ENCODE measurements at regions of chr11 and their contacts with region 1.

Region 1: DNA sequence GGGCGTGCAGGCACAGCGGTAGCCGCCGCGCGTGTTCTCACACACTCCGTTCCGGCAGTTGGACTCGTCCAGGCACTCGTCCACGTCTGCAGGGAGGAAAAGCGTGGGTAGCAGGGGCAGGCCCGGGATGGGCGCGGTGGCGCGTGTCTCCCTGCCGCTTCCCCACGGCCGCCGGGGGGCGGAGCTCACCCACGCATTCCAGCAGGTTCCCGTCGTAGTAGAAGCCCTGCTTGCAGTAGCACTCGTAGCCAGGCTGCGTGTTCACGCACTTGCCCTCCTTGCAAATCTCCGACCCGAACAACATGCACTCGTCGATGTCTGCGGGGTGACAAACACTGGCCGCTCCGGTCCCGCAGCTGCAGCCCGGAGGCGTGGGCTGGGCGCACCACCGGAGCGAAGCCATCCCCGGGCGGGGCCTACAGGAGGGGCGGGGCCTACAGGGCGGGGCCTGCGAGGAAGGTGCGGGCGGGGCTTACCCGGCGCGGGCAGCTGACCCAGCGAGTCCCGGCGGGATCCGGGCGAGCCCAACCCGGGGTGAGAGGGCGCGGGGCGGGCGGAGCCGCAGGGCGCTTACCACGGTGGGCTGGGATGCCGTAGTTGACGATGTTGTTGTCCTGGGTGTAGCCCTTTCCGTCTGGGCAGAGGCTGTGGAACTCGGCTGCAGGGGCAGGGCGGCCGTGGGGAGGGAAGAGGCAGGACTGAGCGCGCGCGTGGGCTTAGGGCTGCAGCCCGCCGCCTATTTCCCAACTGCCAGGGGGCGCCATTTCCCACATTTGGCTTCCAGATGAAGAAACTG is 15.6 kb downstream of the SCYL1 start:
- DNase-seq: peak; percentile 92
- ATAC-seq: peak; percentile 91
- H3K4me3 Mint-ChIP-seq: peak overlapping the region; percentile 79
- H3K27ac Mint-ChIP-seq: peak overlapping the region; percentile 82
- H3K4me1 Mint-ChIP-seq: peaks cover 20% of the 10 kb centered on the region
- H3K27me3 Mint-ChIP-seq: no peaks in the 10 kb centered on the region

Region 2: DNA sequence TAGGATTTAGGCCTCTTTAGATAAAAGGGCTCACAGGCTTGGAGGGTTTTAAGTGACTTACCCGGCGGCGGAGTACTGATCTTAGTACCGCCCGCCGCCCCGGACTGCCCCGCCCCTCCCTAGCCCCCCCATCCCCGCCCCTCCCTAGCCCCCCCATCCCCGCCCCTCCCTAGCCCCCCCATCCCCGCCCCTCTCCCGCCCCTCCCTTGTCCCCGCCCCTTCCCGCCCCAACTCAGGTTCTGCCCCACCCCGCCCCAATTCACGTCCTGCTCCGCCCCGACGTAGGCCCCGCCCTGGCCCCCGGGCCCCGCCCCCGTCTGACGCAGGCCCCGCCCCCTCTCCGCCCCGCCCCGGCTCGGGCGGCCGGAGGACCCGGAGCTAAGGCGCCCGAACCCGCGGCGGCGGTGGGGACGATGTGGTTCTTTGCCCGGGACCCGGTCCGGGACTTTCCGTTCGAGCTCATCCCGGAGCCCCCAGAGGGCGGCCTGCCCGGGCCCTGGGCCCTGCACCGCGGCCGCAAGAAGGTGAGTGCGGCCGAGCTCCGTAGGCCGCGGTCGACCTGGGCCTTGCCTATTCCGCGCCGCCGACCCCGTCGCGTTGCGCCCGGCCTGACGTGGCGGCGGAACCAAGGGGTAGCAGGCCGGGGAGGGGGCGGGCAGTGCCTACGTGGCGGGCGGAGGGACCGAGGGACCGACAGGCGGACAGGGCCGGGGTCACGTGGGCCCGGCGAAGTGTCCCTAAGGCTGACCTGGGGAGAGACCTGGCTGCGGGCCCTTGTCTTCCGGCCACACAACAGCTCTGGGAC is 15.6 kb before region 1 on chr11 and contains the start of gene SCYL1:
- CTCF ChIA-PET with region 1: interaction called, 41 read pairs
- POLR2A ChIA-PET with region 1: interaction called, 12 read pairs
- DNase-seq: peak; percentile 84
- ATAC-seq: peak; percentile 79
- H3K4me3 Mint-ChIP-seq: peak within 1 kb of the TSS; percentile 83
- H3K27ac Mint-ChIP-seq: peak within 1 kb of the TSS; percentile 89
- H3K4me1 Mint-ChIP-seq: peaks cover 62% of the 10 kb centered on the region
- H3K27me3 Mint-ChIP-seq: no peaks in the 10 kb centered on the region
- total RNA-seq, gene SCYL1: 68.0 to 69.5 TPM

Region 3: GRCh38 chr11:65551572-65552398 is 11.3 kb after region 1 on chr11:
- CTCF ChIA-PET with region 1: interaction called, 35 read pairs
- POLR2A ChIA-PET with region 1: interaction called, 3 read pairs
- DNase-seq: peak; percentile 77
- ATAC-seq: peak; percentile 44
- H3K4me3 Mint-ChIP-seq: peak overlapping the region; percentile 13
- H3K27ac Mint-ChIP-seq: peak overlapping the region; percentile 78
- H3K4me1 Mint-ChIP-seq: peaks cover 77% of the 10 kb centered on the region
- H3K27me3 Mint-ChIP-seq: no peaks in the 10 kb centered on the region

Region 4: GRCh38 chr11:65569973-65570918 is 29.8 kb after region 1 on chr11 and contains the start of gene ZNRD2:
- CTCF ChIA-PET with region 1: interaction called, 95 read pairs
- POLR2A ChIA-PET with region 1: interaction called, 9 read pairs
- DNase-seq: peak; percentile 99
- ATAC-seq: peak; percentile 70
- H3K4me3 Mint-ChIP-seq: peak within 1 kb of the TSS; percentile 100
- H3K27ac Mint-ChIP-seq: peak within 1 kb of the TSS; percentile 99
- H3K4me1 Mint-ChIP-seq: peaks cover 71% of the 10 kb centered on the region
- H3K27me3 Mint-ChIP-seq: no peaks in the 10 kb centered on the region
- total RNA-seq, gene ZNRD2: 39.2 to 40.7 TPM

Region 5: DNA sequence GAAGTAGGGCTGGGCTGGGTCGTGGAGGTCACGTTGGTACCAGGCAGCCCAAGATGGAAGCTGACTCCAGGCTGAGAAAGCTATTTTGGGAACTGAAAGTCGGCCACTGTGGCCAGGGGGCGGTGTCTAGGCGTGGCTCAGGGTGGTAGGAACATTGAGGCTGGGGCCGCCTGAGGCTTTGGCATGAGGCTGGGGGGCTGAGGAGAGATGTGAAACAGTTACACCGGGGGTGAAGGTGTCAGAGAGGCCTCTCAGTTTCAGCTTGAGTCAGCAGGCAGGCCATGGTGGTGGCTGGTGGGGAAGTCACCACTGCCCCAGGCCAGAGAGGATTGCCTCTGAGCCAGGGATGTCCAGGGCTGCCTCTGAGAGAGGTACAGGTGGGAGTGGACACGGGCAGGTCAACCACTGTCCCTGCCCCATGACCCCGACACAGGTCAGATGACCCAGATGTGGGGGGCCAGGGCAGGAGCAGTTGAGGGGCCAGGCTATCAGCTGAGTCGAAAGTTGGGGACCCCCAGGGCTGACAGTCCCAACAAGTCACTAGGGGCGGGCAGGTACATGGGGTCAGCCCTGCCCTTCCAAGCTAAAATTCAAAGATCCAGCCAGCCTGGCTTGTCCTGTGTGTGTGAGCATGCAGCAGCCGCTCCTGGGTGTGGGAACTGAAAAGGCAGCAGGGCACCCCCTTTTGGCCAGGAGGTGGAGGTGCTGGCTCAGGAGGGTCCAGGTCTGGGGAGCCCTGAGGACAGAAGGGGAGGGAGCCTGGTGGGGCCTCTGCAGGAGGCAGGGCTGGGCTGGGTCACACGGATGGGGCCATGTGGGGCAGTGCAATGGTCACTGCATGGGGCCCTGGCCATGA is 47.9 kb after region 1 on chr11:
- CTCF ChIA-PET with region 1: interaction called, 172 read pairs
- POLR2A ChIA-PET with region 1: interaction called, 4 read pairs
- DNase-seq: peak; percentile 86
- ATAC-seq: peak; percentile 89
- H3K4me3 Mint-ChIP-seq: peak overlapping the region; percentile 55
- H3K27ac Mint-ChIP-seq: peak overlapping the region; percentile 94
- H3K4me1 Mint-ChIP-seq: peaks cover 48% of the 10 kb centered on the region
- H3K27me3 Mint-ChIP-seq: no peaks in the 10 kb centered on the region